CD4-positive, alpha-beta memory T cell (primary cell): ENCODE measurements at regions of chr3 and their contacts with region 1.

Region 1: GRCh38 chr3:15108082-15108545 is 9.2 kb upstream of the RBSN start:
- DNase-seq: peak; percentile 68 to 71 (median 69)
- H3K4me3 ChIP-seq: no peak overlapping the region
- H3K4me3 Mint-ChIP-seq: peak overlapping the region in 1 of 8 donors; percentile 54
- H3K27ac ChIP-seq: no peak overlapping the region
- H3K27ac Mint-ChIP-seq: peak overlapping the region in 3 of 7 donors; percentile 35 to 86 (median 64)
- H3K4me1 ChIP-seq: peaks cover 4% of the 10 kb centered on the region
- H3K4me1 Mint-ChIP-seq: peaks cover 0 to 8% (median 3%) of the 10 kb centered on the region in 4 donors
- H3K27me3 ChIP-seq: no peaks in the 10 kb centered on the region
- H3K27me3 Mint-ChIP-seq: peaks cover 0 to 7% of the 10 kb centered on the region in 2 donors

Region 2: DNA sequence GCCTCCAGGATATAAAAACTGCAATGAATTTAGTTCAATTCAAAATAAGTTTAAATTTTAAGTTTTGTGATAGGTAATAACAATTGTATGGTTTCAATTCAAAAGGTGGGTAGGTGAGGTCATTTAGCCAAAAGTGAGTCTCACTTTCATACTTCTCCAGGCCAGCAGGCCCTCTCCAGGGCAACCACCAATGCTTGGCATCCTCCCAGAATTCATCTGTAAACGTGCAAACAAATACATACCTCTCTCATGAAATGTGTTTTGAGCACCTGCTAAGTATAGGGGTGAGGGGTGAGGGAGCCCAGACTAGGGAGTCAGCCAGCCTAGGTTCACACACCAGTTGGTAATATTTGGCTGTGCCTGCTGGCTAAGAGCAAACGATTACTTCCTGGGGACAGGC is 12.9 kb after region 1 on chr3:
- CTCF ChIA-PET with region 1: interaction called, 54 read pairs
- POLR2A ChIA-PET with region 1: no interaction called
- intact Hi-C with region 1: no loop called
- DNase-seq: no peak
- H3K4me3 ChIP-seq: no peak overlapping the region
- H3K4me3 Mint-ChIP-seq: no peak overlapping the region
- H3K27ac ChIP-seq: no peak overlapping the region
- H3K27ac Mint-ChIP-seq: no peak overlapping the region
- H3K4me1 ChIP-seq: no peaks in the 10 kb centered on the region
- H3K4me1 Mint-ChIP-seq: peaks cover 0 to 5% (median under 1%) of the 10 kb centered on the region in 4 donors
- H3K27me3 ChIP-seq: no peaks in the 10 kb centered on the region
- H3K27me3 Mint-ChIP-seq: peaks cover 0 to 3% of the 10 kb centered on the region in 2 donors

Region 3: GRCh38 chr3:15405448-15406050 is 297.4 kb after region 1 on chr3:
- CTCF ChIA-PET with region 1: interaction called, 3 read pairs
- POLR2A ChIA-PET with region 1: no interaction called
- intact Hi-C with region 1: loop called (anchors 1 kb)
- DNase-seq: peak; percentile 49 to 61 (median 55)
- H3K4me3 ChIP-seq: no peak overlapping the region
- H3K4me3 Mint-ChIP-seq: no peak overlapping the region
- H3K27ac ChIP-seq: no peak overlapping the region
- H3K27ac Mint-ChIP-seq: peak overlapping the region in 4 of 7 donors; percentile 8 to 40 (median 24)
- H3K4me1 ChIP-seq: peaks cover 3% of the 10 kb centered on the region
- H3K4me1 Mint-ChIP-seq: peaks cover 7 to 22% (median 14%) of the 10 kb centered on the region in 4 donors
- H3K27me3 ChIP-seq: no peaks in the 10 kb centered on the region
- H3K27me3 Mint-ChIP-seq: no peaks in the 10 kb centered on the region

Region 4: GRCh38 chr3:15557511-15557946 is 449.4 kb after region 1 on chr3:
- CTCF ChIA-PET with region 1: no interaction called
- POLR2A ChIA-PET with region 1: no interaction called
- intact Hi-C with region 1: loop called (anchors 2 kb)
- DNase-seq: peak; percentile 67 to 82 (median 79)
- H3K4me3 ChIP-seq: no peak overlapping the region
- H3K4me3 Mint-ChIP-seq: peak overlapping the region in 2 of 8 donors; percentile 9 to 59
- H3K27ac ChIP-seq: no peak overlapping the region
- H3K27ac Mint-ChIP-seq: peak overlapping the region; percentile 5 to 75 (median 62)
- H3K4me1 ChIP-seq: peaks cover 19% of the 10 kb centered on the region
- H3K4me1 Mint-ChIP-seq: peaks cover 17 to 23% (median 20%) of the 10 kb centered on the region in 4 donors
- H3K27me3 ChIP-seq: no peaks in the 10 kb centered on the region
- H3K27me3 Mint-ChIP-seq: no peaks in the 10 kb centered on the region

Region 5: DNA sequence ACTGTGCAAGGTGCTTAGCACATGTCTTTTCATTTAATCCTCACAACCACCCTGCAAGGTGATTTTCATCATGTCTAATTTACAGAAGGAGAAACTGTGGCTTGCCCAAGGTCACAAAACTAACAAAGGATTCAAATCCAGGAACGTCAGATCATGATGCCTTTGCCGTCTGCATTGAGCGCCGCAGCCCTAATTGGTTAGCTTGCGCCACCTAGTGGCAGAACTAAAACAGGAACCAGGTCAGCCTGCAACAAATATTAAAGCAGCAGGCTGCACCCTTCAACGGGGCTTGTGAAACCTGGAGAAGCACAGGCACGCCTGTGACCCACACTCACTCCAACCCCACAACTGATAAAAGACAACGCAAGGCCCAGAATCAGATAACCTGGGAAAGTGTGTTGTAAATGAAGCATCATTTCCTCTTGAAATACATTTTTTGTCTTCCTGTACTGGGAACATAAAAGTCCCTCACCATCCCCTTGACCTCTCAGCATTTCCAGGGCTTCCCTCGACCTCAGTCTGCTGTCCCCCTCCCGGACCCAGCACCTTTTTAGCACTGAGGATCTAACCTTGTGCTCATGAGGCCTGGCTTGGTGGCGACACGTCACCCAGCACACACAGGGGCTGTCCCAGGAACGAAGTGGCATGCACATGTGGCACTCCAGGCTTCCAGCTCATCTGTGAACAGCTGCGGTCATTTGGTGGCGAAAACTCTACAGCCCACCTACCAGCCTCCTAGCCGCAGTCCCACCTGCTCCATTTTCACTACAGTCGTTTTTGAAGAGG is 1139.4 kb after region 1 on chr3:
- CTCF ChIA-PET with region 1: no interaction called
- POLR2A ChIA-PET with region 1: no interaction called
- intact Hi-C with region 1: loop called (anchors 1 kb)
- DNase-seq: peak; percentile 73 to 78 (median 75)
- H3K4me3 ChIP-seq: no peak overlapping the region
- H3K4me3 Mint-ChIP-seq: peak overlapping the region in 5 of 8 donors; percentile 10 to 57 (median 38)
- H3K27ac ChIP-seq: no peak overlapping the region
- H3K27ac Mint-ChIP-seq: peak overlapping the region in 1 of 7 donors; percentile 32
- H3K4me1 ChIP-seq: peaks cover 3% of the 10 kb centered on the region
- H3K4me1 Mint-ChIP-seq: peaks cover 6 to 17% (median 9%) of the 10 kb centered on the region in 4 donors
- H3K27me3 ChIP-seq: no peaks in the 10 kb centered on the region
- H3K27me3 Mint-ChIP-seq: no peaks in the 10 kb centered on the region